PC-3 (cell line): ENCODE measurements at regions of chr14 and their contacts with region 1.

Region 1: DNA sequence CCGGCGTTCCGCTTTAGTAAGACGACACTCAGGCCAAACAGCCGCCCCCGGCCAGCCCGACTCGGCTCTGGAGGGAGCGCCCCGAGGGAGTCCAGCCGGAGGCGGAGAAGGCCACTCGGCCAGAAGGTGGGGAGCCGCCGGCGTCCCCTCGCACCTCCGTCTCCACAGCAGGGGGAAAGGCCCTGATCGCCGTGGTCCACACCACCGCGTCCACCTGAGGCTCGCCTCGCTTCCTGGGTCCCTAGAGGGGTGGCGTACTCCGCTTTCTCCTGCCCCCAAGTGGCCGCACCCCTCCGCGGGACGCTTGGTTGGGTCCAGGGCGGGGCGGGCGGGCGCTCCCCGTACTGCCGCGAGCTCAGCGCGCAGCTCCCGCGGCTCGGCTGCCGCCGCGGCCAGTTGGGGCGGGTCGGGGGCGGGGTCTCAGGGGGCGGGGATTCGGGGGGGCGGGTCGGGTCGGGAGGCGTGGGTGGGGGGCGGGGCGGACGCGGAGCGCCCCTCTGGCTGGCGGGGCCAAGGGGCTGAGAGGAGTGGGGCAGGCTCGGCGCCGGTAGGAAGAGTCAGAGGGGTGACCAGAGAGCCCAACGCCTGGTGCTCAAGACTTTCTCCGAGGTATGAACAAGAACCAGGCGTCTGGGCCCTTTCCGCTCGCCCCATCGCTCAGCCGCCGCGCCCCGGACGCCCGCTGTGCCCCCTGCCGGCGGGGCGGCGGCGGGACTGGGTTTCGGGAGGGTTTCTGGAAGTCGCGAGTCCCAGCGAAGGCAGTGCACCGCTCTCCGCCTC is at the start of gene FRMD6:
- DNase-seq: peak; percentile 86
- ATAC-seq: peak; percentile 71
- H3K4me3 ChIP-seq: peak within 1 kb of the TSS; percentile 86
- H3K27ac ChIP-seq: peak within 1 kb of the TSS; percentile 83
- H3K4me1 ChIP-seq: peaks cover 48% of the 10 kb centered on the region
- H3K27me3 ChIP-seq: no peaks in the 10 kb centered on the region
- CTCF ChIP-seq: peak; percentile 86
- total RNA-seq, gene FRMD6: 88.3 and 103 TPM in 2 replicates

Region 2: DNA sequence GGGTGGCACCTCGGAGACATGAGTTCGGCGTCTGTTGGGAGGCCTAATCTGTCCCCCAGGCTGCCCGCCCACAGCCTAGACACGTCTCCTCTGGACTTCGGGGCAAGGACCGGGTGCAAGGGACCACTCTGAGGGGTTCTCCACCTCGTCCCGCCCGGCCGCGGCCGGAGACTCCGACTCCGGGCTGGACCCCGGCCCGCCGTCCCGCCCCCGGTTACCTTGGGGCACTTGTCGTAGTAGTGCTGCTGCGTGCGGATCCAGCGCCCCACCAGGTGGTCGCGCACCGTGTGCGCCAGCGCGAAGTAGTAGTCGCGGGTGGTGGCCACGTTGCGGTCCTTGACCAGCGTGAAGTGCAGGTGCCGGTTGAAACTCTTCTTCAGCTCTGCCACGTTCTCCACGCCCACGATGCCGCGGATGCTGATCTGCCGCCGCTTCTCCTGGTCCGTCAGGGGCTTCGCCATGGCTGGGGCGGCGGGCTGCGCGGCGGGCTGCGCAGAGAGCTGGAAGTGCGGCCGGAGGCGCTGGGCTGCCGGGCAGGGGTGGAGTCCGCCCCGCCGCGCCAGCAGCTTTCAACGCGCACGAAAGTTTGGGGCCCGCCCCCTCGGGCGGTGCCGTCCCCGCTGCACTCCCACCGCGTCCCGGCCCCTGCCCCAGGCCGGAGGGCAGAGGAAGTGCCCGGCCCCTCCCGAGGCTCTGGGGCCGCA is 707.5 kb before region 1 on chr14 and contains the start of gene PYGL:
- CTCF ChIA-PET with region 1: no interaction called
- POLR2A ChIA-PET with region 1: no interaction called
- intact Hi-C with region 1: loop called (anchors 10 kb)
- DNase-seq: peak; percentile 88
- ATAC-seq: peak; percentile 76
- H3K4me3 ChIP-seq: peak within 1 kb of the TSS; percentile 97
- H3K27ac ChIP-seq: peak within 1 kb of the TSS; percentile 57
- H3K4me1 ChIP-seq: peaks cover 19% of the 10 kb centered on the region
- H3K27me3 ChIP-seq: no peaks in the 10 kb centered on the region
- CTCF ChIP-seq: no peak
- total RNA-seq, gene PYGL: 163 and 174 TPM in 2 replicates

Region 3: GRCh38 chr14:51369814-51370213 is 281.8 kb before region 1 on chr14:
- CTCF ChIA-PET with region 1: no interaction called
- POLR2A ChIA-PET with region 1: no interaction called
- intact Hi-C with region 1: loop called (anchors 2 kb)
- DNase-seq: peak; percentile 51
- ATAC-seq: peak; percentile 50
- H3K4me3 ChIP-seq: no peak overlapping the region
- H3K27ac ChIP-seq: peak overlapping the region; percentile 21; the same call in 1 of the 2 replicates
- H3K4me1 ChIP-seq: peaks cover 24% of the 10 kb centered on the region
- H3K27me3 ChIP-seq: no peaks in the 10 kb centered on the region
- CTCF ChIP-seq: peak; percentile 85

Region 4: GRCh38 chr14:51419685-51420084 is 231.9 kb before region 1 on chr14:
- CTCF ChIA-PET with region 1: no interaction called
- POLR2A ChIA-PET with region 1: no interaction called
- intact Hi-C with region 1: no loop called
- DNase-seq: no peak
- ATAC-seq: no peak
- H3K4me3 ChIP-seq: no peak overlapping the region
- H3K27ac ChIP-seq: no peak overlapping the region
- H3K4me1 ChIP-seq: no peaks in the 10 kb centered on the region
- H3K27me3 ChIP-seq: no peaks in the 10 kb centered on the region
- CTCF ChIP-seq: no peak

Region 5: DNA sequence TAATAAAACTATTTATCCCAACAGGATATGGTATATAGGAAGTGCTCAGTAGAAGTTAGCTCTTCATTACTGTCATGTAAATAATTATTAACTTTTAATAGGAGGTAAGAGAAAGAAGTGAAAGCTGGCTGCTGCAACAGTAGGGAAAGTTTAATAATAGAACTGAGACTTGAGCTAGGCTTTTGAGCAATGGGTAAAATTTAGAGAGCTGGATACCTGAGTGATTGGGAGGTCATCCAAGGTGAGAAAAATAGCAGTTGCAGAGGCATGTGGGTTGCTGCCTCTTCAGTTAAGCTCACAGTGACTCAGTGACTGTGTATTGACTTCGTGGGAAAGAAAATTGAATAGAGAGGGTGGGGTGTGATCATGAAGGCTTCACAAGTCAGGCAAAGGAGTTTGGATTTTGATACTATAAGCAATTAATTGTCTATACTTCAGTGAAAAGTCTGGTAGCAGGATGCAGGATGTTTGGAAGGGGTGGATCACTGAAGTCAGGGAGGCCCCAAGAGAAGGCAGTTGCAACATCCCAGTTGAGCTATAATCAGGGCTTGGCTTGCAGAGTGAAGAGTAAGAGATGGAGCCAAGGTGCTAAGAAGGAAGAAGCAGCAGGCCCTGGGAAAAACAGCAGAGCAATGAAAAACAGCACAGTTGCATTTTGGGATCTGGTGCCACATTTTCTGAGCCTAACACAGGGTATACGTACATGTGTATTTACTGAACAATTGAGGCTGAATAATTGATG is 171.8 kb before region 1 on chr14:
- CTCF ChIA-PET with region 1: no interaction called
- POLR2A ChIA-PET with region 1: interaction called, 12 read pairs
- intact Hi-C with region 1: no loop called
- DNase-seq: peak; percentile 16
- ATAC-seq: peak; percentile 53
- H3K4me3 ChIP-seq: no peak overlapping the region
- H3K27ac ChIP-seq: no peak overlapping the region
- H3K4me1 ChIP-seq: peaks cover 17% of the 10 kb centered on the region
- H3K27me3 ChIP-seq: no peaks in the 10 kb centered on the region
- CTCF ChIP-seq: no peak

Region 6: DNA sequence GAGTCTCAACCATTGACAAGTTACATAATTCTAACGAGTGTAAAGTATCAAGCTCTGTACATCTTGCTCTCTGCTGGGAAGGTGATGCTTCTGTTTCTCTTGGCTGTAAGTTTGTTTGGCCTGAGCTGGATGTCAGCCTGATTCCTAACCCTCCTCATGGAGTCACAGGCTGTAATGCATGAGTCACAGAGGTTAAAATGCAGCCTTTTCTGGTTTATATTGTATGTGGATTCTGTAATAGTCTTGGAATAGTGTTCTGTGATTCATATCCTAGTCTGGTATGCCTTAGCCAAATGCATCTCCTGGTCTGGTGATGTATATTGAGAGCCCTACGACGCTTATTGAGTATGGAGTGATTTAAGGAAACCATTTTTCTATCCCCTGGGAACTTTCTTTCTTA is 104.3 kb before region 1 on chr14:
- CTCF ChIA-PET with region 1: interaction called, 5 read pairs
- POLR2A ChIA-PET with region 1: interaction called, 11 read pairs
- intact Hi-C with region 1: loop called (anchors 2 kb)
- DNase-seq: peak; percentile 99
- ATAC-seq: peak; percentile 93
- H3K4me3 ChIP-seq: peak overlapping the region; percentile 9; the same call in 1 of the 2 replicates
- H3K27ac ChIP-seq: peak overlapping the region; percentile 91
- H3K4me1 ChIP-seq: peaks cover 54% of the 10 kb centered on the region
- H3K27me3 ChIP-seq: no peaks in the 10 kb centered on the region
- CTCF ChIP-seq: no peak

Region 7: DNA sequence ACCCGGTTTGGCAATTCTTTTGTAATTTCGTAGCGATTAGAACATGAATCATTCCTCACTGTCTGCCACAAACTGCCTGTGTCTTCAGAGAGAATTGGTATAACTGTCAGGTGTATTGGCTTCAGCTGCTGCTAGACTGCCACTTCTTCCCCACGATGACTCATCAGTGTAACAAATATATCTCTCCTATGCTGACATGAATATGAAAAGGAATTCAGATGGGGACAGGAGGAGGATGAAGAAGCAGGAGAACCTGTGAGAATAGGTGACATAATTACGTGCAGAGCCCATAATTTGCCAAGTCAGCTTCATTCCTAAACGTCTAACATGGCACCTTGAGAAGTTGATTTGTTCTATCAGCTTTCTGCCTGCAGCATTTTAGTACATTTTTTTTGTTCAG is 65.0 kb after region 1 on chr14:
- CTCF ChIA-PET with region 1: no interaction called
- POLR2A ChIA-PET with region 1: no interaction called
- intact Hi-C with region 1: loop called (anchors 2 kb)
- DNase-seq: peak; percentile 71
- ATAC-seq: peak; percentile 95
- H3K4me3 ChIP-seq: no peak overlapping the region
- H3K27ac ChIP-seq: no peak overlapping the region
- H3K4me1 ChIP-seq: peaks cover 14% of the 10 kb centered on the region
- H3K27me3 ChIP-seq: no peaks in the 10 kb centered on the region
- CTCF ChIP-seq: no peak

Region 8: GRCh38 chr14:51979088-51979709 is 327.6 kb after region 1 on chr14:
- CTCF ChIA-PET with region 1: interaction called, 4 read pairs
- POLR2A ChIA-PET with region 1: no interaction called
- intact Hi-C with region 1: loop called (anchors 10 kb)
- DNase-seq: peak; percentile 93
- ATAC-seq: peak; percentile 96
- H3K4me3 ChIP-seq: no peak overlapping the region
- H3K27ac ChIP-seq: no peak overlapping the region
- H3K4me1 ChIP-seq: no peaks in the 10 kb centered on the region
- H3K27me3 ChIP-seq: no peaks in the 10 kb centered on the region
- CTCF ChIP-seq: peak; percentile 97